Psoas muscle (tissue), 8 donors: ENCODE measurements at regions of chr11 and their contacts with region 1.

Region 1: GRCh38 chr11:60899046-60899936 is 7.1 kb downstream of the PRPF19 start:
- DNase-seq: no peak
- ATAC-seq: peak; percentile 87 to 95 (median 90)
- H3K4me3 ChIP-seq: no peak overlapping the region
- H3K27ac ChIP-seq: peak overlapping the region; percentile 37
- H3K4me1 ChIP-seq: peaks cover 3% of the 10 kb centered on the region
- H3K27me3 ChIP-seq: no peaks in the 10 kb centered on the region
- CTCF ChIP-seq: peak; percentile 96

Region 2: GRCh38 chr11:60775420-60775961 is 123.8 kb before region 1 on chr11:
- intact Hi-C with region 1: loop called (anchors 5 kb)
- DNase-seq: peak; percentile 76 to 81
- ATAC-seq: peak; percentile 90 to 93 (median 92)
- H3K4me3 ChIP-seq: no peak overlapping the region
- H3K27ac ChIP-seq: peak overlapping the region; percentile 42
- H3K4me1 ChIP-seq: no peaks in the 10 kb centered on the region
- H3K27me3 ChIP-seq: peaks cover 0 to 5% (median 0%) of the 10 kb centered on the region in 3 donors
- CTCF ChIP-seq: peak; percentile 89

Region 3: GRCh38 chr11:60813324-60813723 is 86.0 kb before region 1 on chr11:
- intact Hi-C with region 1: no loop called
- DNase-seq: peak in 1 of 2 donors; percentile 6
- ATAC-seq: no peak
- H3K4me3 ChIP-seq: no peak overlapping the region
- H3K27ac ChIP-seq: no peak overlapping the region
- H3K4me1 ChIP-seq: no peaks in the 10 kb centered on the region
- H3K27me3 ChIP-seq: no peaks in the 10 kb centered on the region
- CTCF ChIP-seq: no peak

Region 4: DNA sequence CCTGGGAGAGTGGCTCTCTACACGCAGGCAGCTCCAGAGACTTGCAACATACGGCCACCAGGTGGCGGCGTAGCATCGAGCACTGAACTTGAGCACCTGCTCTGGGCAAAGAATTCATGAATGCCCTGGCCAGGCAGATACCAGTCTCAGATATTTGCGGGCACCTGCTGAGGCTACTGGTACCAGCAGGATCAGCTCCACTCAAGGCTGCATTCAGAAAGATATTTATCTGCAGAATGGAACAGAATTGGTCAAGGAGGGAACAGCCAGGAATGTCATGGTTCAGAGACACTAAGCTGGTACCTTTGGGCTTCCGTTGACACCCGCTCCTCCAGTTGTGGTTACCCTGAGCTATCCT is 68.2 kb before region 1 on chr11:
- intact Hi-C with region 1: loop called (anchors 1 to 5 kb)
- DNase-seq: peak; percentile 86 to 89
- ATAC-seq: peak; percentile 91 to 99 (median 98)
- H3K4me3 ChIP-seq: no peak overlapping the region
- H3K27ac ChIP-seq: no peak overlapping the region
- H3K4me1 ChIP-seq: peaks cover 7% of the 10 kb centered on the region
- H3K27me3 ChIP-seq: no peaks in the 10 kb centered on the region
- CTCF ChIP-seq: peak; percentile 98

Region 5: GRCh38 chr11:60841797-60842667 is 57.3 kb before region 1 on chr11 and contains the start of gene CCDC86:
- intact Hi-C with region 1: loop called (anchors 2 to 5 kb)
- DNase-seq: peak; percentile 97 to 98
- ATAC-seq: peak; percentile 95 to 97 (median 96)
- H3K4me3 ChIP-seq: peak within 1 kb of the TSS; percentile 99
- H3K27ac ChIP-seq: peak within 1 kb of the TSS; percentile 90
- H3K4me1 ChIP-seq: peaks cover 28% of the 10 kb centered on the region
- H3K27me3 ChIP-seq: no peaks in the 10 kb centered on the region
- CTCF ChIP-seq: no peak
- total RNA-seq, gene CCDC86: 24.8 to 43.9 (median 30.1) TPM